PC-3 (cell line): ENCODE measurements at regions of chr6 and their contacts with region 1.

Region 1: DNA sequence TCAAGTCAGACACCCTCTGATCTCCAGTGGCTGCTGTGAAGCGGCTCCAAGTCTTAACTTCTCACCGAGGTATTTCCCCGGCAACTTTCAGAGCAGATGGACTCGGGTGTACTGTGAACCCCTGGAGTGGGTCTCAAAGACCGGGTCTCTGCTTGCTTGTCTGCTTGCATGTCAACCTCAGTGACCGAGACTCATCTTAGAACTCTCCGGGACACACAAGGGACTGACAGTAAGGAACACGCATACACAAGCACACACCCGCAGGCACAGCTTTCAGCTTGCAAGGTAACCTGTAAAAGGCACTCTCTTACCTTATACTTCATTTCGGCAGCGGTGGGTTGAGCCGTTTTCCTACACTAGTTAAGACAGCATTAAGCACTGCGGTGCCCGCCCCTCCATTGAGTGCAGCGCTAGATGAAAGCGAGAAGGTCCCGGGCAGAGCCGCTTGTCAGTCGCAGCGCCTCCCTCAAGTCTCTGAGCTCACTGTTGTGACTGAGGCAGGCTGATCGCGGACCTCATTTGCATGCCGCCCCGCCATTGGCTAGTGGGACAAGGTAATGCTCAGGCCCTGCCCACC is at the start of gene NEDD9:
- DNase-seq: peak; percentile 96
- ATAC-seq: peak; percentile 93
- H3K4me3 ChIP-seq: peak within 1 kb of the TSS; percentile 97
- H3K27ac ChIP-seq: peak within 1 kb of the TSS; percentile 81
- H3K4me1 ChIP-seq: peaks cover 36% of the 10 kb centered on the region
- H3K27me3 ChIP-seq: no peaks in the 10 kb centered on the region
- CTCF ChIP-seq: no peak
- total RNA-seq, gene NEDD9: 12.1 and 13.9 TPM in 2 replicates

Region 2: GRCh38 chr6:10510592-10511367 is 721.5 kb before region 1 on chr6:
- CTCF ChIA-PET with region 1: no interaction called
- POLR2A ChIA-PET with region 1: no interaction called
- intact Hi-C with region 1: no loop called
- DNase-seq: peak; percentile 77
- ATAC-seq: peak; percentile 98
- H3K4me3 ChIP-seq: peak overlapping the region; percentile 55
- H3K27ac ChIP-seq: no peak overlapping the region
- H3K4me1 ChIP-seq: peaks cover 11% of the 10 kb centered on the region
- H3K27me3 ChIP-seq: no peaks in the 10 kb centered on the region
- CTCF ChIP-seq: peak; percentile 92

Region 3: DNA sequence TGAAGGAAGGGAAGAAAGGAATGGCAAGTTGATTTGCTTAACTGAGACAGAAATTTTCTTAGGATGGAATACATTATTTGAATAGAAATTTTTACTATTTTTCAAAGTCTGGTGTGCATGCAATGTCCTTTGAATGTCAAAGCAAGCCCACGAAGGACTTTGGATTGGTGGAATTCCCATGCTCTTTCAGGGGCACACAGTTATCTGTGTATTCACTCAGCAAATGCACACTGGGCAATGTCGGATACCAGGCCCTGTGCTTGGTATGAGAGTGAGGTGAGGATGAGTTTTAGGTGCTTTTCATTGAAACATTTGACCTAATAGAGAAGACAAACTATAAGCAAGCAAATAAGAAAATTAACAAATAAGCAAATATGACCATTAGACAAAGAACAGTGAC is 272.1 kb before region 1 on chr6:
- CTCF ChIA-PET with region 1: no interaction called
- POLR2A ChIA-PET with region 1: interaction called, 10 read pairs
- intact Hi-C with region 1: no loop called
- DNase-seq: no peak
- ATAC-seq: no peak
- H3K4me3 ChIP-seq: no peak overlapping the region
- H3K27ac ChIP-seq: no peak overlapping the region
- H3K4me1 ChIP-seq: peaks cover 12% of the 10 kb centered on the region
- H3K27me3 ChIP-seq: no peaks in the 10 kb centered on the region
- CTCF ChIP-seq: no peak

Region 4: DNA sequence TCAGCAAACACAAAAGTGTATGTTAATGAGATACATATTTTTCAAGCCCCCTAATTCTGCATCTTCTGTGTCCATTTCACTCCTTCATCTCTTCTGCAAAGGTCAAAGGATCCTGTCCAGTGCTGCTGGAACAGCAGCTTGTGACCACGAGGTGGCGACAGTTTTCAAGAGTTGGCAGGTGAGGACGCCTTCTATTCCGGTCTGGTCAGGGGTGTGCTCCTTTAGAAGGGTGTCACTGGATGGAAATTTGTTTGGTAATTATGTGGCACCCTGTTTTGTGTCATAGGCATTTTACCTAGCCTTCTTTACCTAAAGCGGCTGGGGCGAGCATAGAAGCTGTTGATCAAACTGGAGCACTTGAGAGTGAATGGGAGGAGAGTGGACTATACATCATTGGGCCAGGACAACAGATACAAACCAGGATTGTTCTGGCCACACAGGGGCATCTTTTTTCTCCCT is 87.9 kb before region 1 on chr6:
- CTCF ChIA-PET with region 1: interaction called, 4 read pairs
- POLR2A ChIA-PET with region 1: no interaction called
- intact Hi-C with region 1: loop called (anchors 1 kb)
- DNase-seq: peak; percentile 86
- ATAC-seq: peak; percentile 92
- H3K4me3 ChIP-seq: no peak overlapping the region
- H3K27ac ChIP-seq: no peak overlapping the region
- H3K4me1 ChIP-seq: peaks cover 15% of the 10 kb centered on the region
- H3K27me3 ChIP-seq: no peaks in the 10 kb centered on the region
- CTCF ChIP-seq: peak; percentile 99

Region 5: GRCh38 chr6:11207199-11207968 is 24.9 kb before region 1 on chr6:
- CTCF ChIA-PET with region 1: no interaction called
- POLR2A ChIA-PET with region 1: interaction called, 28 read pairs
- intact Hi-C with region 1: loop called (anchors 1 kb)
- DNase-seq: peak; percentile 98
- ATAC-seq: peak; percentile 85
- H3K4me3 ChIP-seq: peak overlapping the region; percentile 56; the same call in 1 of the 2 replicates
- H3K27ac ChIP-seq: peak overlapping the region; percentile 97
- H3K4me1 ChIP-seq: peaks cover 46% of the 10 kb centered on the region
- H3K27me3 ChIP-seq: no peaks in the 10 kb centered on the region
- CTCF ChIP-seq: no peak

Region 6: DNA sequence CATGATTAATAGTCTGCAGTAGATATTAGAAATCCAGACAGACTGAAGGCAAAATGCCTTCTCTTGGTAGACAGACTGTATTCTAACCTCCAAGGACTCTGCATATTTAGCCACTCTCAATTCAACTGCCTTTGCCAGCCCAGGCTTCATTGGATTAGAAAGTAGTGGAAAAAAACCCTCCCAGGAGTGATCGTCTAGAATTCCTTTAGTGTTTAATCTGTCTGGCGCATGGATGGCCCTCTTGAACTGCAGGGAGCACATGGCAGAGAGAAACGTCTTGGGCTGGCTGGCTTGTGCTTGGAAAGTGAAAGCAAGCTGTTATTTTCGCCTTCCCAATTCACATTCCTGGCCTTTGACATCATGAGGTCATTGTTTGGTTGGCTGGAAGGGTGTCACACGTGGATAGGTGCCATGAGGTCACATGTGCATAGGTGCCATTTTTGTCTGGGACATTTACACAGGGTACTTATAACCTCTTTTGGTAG is 31.1 kb after region 1 on chr6:
- CTCF ChIA-PET with region 1: no interaction called
- POLR2A ChIA-PET with region 1: no interaction called
- intact Hi-C with region 1: no loop called
- DNase-seq: peak; percentile 20
- ATAC-seq: no peak
- H3K4me3 ChIP-seq: no peak overlapping the region
- H3K27ac ChIP-seq: no peak overlapping the region
- H3K4me1 ChIP-seq: peaks cover 5% of the 10 kb centered on the region; the same call in 1 of the 2 replicates
- H3K27me3 ChIP-seq: no peaks in the 10 kb centered on the region
- CTCF ChIP-seq: no peak

Region 7: GRCh38 chr6:11317885-11318771 is 85.8 kb after region 1 on chr6:
- CTCF ChIA-PET with region 1: no interaction called
- POLR2A ChIA-PET with region 1: interaction called, 13 read pairs
- intact Hi-C with region 1: loop called (anchors 1 kb)
- DNase-seq: peak; percentile 98
- ATAC-seq: peak; percentile 61
- H3K4me3 ChIP-seq: no peak overlapping the region
- H3K27ac ChIP-seq: peak overlapping the region; percentile 89
- H3K4me1 ChIP-seq: peaks cover 62% of the 10 kb centered on the region
- H3K27me3 ChIP-seq: no peaks in the 10 kb centered on the region
- CTCF ChIP-seq: no peak

Region 8: DNA sequence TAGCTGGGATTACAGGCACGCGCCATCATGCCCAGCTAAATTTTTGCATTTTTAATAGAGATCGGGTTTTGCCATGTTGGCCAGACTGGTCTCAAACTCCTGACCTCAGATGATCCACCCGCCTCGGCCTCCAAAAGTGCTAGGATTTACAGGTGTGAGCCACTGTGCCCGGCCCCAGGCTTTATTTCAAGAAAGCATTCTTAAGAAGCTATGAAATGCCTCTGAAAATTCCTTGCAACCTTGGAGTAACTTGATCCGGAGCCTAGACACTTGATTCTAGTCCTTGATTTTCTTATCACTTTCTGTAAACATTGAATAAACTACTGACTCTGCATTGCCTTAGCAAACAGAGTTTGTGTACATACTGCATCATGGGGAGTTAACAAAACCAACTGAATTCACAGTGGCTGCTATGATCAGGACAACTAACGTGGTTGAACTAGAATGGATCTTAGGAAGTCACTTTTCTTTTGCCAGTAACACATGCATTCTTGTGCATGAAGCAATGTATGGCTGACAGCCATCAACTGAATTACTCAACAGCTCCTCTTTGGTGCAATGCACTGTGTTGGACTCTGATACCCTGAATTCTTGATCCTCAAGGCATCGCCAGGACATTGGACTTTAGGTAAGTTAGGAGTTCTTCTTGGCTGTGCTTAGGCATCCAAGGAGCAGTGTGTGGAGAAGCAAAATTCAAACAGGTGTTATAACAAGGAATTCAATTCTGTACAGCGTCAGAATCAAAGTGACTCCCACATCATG is 202.5 kb after region 1 on chr6:
- CTCF ChIA-PET with region 1: interaction called, 3 read pairs
- POLR2A ChIA-PET with region 1: interaction called, 3 read pairs
- intact Hi-C with region 1: loop called (anchors 1 kb)
- DNase-seq: peak; percentile 97
- ATAC-seq: peak; percentile 85
- H3K4me3 ChIP-seq: no peak overlapping the region
- H3K27ac ChIP-seq: peak overlapping the region; percentile 98
- H3K4me1 ChIP-seq: peaks cover 53% of the 10 kb centered on the region
- H3K27me3 ChIP-seq: no peaks in the 10 kb centered on the region
- CTCF ChIP-seq: no peak